AG04450 (cell line): ENCODE measurements at regions of chr2 and their contacts with region 1.

Region 1: GRCh38 chr2:174748948-174749347 is 15.3 kb downstream of the CHRNA1 start:
- DNase-seq: peak; percentile 16
- H3K4me3 ChIP-seq: no peak overlapping the region
- H3K27ac ChIP-seq: no peak overlapping the region
- H3K27me3 ChIP-seq: peaks cover 2% of the 10 kb centered on the region
- CTCF ChIP-seq: peak; percentile 83

Region 2: DNA sequence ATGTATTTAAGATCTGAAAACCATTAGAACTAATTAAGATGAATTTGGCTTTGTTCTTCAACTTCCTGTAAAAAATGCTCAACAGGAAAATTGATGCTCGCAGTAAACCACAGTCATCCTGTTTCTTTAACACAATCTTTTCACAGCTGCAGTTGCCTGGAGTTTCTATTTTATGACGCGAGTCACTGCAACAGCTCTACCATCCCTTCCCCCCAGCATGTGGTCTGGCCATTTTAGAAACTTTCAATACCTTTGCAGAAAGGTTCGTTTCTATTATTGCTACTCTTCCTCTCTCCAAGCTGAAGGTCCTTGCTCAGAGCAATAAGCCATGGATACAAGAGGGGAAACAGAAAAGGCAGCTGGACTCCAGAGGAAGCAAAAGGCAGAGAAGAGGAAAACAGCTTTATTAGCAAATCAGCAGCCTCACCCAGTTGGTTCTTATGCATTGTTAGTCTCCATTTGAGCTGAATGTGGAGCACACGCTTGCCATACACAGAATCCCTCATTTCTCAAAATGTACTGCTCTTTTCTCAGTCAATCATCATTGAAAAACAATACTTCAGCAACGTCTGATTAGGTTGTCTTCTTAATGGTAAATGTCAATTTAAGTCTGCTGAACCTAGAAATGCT is 155.3 kb before region 1 on chr2:
- CTCF ChIA-PET with region 1: no interaction called
- POLR2A ChIA-PET with region 1: no interaction called
- DNase-seq: no peak
- H3K4me3 ChIP-seq: no peak overlapping the region
- H3K27ac ChIP-seq: peak overlapping the region; percentile 31
- H3K27me3 ChIP-seq: no peaks in the 10 kb centered on the region
- CTCF ChIP-seq: no peak

Region 3: DNA sequence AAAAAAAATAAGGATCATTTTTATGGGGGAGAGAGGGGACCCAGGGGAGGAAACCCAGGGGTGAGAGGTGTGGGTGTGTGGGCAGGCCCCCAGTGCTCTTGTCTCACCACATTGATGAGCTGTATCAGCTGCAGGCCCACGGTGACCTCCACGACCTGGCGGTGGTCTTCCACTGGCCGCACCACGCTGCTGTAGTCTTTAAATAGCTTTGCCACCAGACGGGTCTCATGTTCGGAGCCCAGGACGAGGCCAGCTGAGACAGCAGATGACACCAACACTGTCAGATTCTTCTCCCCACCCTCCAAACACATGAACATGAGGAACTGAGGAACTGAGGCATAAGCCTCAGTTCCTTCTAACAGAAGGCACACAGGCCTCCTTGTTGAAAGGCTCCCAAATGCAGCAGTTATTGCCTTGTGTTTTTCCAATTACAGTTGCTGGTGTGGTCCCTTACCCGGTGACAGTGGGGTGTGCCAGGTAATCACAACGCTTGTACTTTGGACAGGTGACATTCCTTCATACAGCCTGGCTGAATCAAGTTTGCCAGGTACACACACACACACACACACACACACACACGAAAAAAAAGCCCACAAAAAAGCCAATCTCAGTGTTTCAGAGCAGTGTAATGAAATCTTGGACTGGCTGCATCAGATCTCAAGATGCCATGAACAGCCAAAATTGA is 10.6 kb after region 1 on chr2:
- CTCF ChIA-PET with region 1: interaction called, 74 read pairs
- POLR2A ChIA-PET with region 1: no interaction called
- DNase-seq: no peak
- H3K4me3 ChIP-seq: no peak overlapping the region
- H3K27ac ChIP-seq: no peak overlapping the region
- H3K27me3 ChIP-seq: no peaks in the 10 kb centered on the region
- CTCF ChIP-seq: no peak

Region 4: DNA sequence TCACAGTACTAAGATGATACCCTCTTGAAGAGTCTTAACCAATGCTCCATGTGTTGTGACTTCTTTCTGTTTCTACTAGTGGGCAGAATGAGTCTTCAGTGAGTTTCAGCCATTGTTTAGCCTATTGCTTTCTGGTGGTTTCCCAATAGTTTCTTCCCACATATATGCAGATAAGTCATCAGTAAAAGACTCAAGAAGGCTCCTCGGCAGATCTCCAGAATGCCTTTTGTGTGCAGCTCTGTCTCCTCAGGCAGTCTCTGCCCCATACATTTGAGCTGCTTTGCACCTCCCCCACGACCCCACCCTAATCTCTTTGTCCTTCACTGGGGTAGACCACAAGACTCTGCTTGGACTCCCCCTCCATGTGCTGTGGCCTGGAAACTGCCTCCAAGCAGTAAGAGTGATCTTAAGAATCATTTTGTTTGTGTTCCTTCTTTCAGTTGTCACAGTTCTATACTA is 86.9 kb after region 1 on chr2:
- CTCF ChIA-PET with region 1: interaction called, 17 read pairs
- POLR2A ChIA-PET with region 1: no interaction called
- DNase-seq: peak; percentile 86
- H3K4me3 ChIP-seq: no peak overlapping the region
- H3K27ac ChIP-seq: peak overlapping the region; percentile 81
- H3K27me3 ChIP-seq: no peaks in the 10 kb centered on the region
- CTCF ChIP-seq: no peak

Region 5: DNA sequence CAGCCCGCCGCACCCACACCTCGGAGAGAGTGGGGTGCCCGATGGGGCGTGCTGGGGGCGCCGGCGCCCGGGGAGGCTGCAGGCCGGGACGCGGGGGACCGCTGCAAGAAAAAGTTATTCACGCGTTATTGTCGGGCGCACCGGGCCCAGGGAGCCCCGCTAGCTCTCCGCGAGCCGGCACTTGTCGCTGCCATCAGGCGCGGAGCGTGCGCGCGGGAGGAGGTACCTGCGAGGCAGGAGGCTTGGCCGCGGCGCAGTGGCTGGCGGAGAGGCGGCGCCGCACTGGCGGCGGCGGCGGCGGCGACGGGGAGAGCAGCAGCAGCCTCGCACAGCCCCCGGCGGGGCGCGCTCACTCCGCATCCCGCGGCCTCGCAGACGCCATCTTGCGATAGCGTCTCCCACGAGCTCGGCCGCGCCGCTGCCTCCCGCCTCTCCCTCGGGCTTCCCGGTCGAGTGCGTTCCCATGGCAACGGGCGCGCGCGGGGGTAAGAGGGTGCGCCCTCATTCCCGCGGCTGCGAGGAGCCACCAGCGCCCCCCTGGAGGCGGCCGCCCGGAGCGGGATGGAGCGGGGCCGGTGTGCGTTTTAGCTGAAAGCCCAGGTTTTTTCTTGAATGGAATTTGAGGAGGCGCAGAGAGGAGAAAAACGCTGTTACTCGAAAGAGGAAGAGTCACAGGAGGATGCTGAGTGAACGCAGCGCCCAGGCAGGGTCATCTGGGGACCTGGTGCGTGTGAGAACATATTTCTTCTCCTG is 256.2 kb after region 1 on chr2 and contains the start of gene CHN1:
- CTCF ChIA-PET with region 1: interaction called, 14 read pairs
- POLR2A ChIA-PET with region 1: no interaction called
- DNase-seq: peak; percentile 45
- H3K4me3 ChIP-seq: peak within 1 kb of the TSS; percentile 66
- H3K27ac ChIP-seq: no peak within 1 kb of the TSS
- H3K27me3 ChIP-seq: peaks cover 14% of the 10 kb centered on the region
- CTCF ChIP-seq: peak; percentile 19
- polyA plus RNA-seq, gene CHN1: 207 and 258 TPM in 2 replicates

Region 6: GRCh38 chr2:175030380-175031271 is 281.7 kb after region 1 on chr2:
- CTCF ChIA-PET with region 1: interaction called, 15 read pairs
- POLR2A ChIA-PET with region 1: no interaction called
- DNase-seq: peak; percentile 8
- H3K4me3 ChIP-seq: no peak overlapping the region
- H3K27ac ChIP-seq: peak overlapping the region; percentile 0
- H3K27me3 ChIP-seq: no peaks in the 10 kb centered on the region
- CTCF ChIP-seq: peak; percentile 59